Activated CD4-positive, alpha-beta memory T cell treated with anti-CD3 and anti-CD28 coated beads for 36 hours (primary cell): ENCODE measurements at regions of chrX and their contacts with region 1.

Region 1: DNA sequence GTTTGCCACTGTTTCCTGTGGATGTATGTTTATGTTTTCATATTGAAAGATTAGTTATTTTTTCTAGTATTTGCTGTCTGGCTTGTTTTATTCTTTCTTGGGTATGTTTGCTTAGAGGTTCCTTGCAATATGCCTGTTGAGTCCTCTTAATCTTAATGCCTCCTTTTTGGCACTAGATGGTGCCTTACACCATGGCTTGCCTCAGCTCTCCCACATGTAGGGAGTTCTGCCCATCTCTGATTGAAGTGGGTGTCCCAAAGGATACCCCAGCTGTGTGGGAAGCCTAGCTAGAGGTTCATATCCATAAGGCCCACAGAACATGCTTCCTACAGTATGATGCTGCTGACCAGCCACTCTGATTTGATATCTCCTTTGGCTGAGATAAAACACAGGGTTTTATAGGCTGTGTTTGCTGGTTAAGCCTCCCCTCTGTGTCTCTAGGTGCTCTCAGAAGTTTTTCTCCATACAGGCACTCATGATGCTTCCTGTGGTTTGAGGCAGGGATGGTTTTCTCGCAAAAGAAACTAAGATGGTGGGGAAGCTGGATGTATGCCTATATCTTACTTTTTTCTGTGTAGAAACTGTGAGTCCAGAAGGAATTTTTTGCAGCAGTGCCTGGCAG is 162.4 kb downstream of the ASB9 start:
- DNase-seq: peak; percentile 9
- H3K4me3 Mint-ChIP-seq: no peak overlapping the region
- H3K27ac Mint-ChIP-seq: no peak overlapping the region
- H3K4me1 Mint-ChIP-seq: peaks cover 12% of the 10 kb centered on the region
- H3K27me3 Mint-ChIP-seq: peaks cover 3% of the 10 kb centered on the region

Region 2: GRCh38 chrX:15033917-15034316 is 73.6 kb before region 1 on chrX:
- CTCF ChIA-PET with region 1: no interaction called
- POLR2A ChIA-PET with region 1: no interaction called
- intact Hi-C with region 1: no loop called
- DNase-seq: no peak
- H3K4me3 Mint-ChIP-seq: no peak overlapping the region
- H3K27ac Mint-ChIP-seq: no peak overlapping the region
- H3K4me1 Mint-ChIP-seq: peaks cover 16% of the 10 kb centered on the region
- H3K27me3 Mint-ChIP-seq: no peaks in the 10 kb centered on the region

Region 3: DNA sequence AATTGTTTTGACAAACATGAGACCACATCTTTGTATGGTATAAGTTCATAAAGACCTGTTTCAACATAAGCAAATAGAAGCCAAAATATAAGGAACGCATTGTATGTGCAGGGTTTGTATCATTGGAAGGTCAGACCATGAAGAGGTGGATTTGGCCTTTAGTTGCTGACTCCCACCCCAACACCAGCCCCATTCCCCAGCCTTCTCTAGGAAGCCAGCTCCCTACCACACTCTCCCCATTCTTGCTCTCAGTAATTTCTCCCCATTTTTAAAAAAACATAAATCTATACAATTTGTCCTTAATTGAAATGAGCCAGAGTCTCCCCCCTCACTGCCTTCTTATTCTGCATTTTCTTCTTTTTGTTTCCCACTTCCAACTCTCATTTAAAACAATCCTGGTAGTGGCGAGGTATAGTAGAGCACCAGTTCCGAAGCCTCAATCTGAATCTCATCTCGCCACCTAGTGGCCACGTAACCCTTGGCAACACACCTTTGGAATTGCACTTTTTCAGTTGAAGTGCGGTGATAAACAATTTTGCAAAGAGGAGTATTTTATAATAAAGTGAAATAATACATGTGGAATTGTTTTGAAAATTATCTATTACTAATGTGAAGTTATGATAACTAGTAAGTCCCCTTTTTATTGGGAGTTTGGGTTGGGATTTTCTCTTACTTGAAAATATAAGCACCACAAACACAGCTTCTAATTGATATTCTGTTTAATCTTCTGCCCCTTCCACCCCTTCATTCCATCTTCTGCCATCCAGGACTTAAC is 35.8 kb after region 1 on chrX:
- CTCF ChIA-PET with region 1: interaction called, 20 read pairs
- POLR2A ChIA-PET with region 1: no interaction called
- intact Hi-C with region 1: loop called (anchors 1 kb)
- DNase-seq: peak; percentile 59
- H3K4me3 Mint-ChIP-seq: no peak overlapping the region
- H3K27ac Mint-ChIP-seq: no peak overlapping the region
- H3K4me1 Mint-ChIP-seq: peaks cover 15% of the 10 kb centered on the region
- H3K27me3 Mint-ChIP-seq: no peaks in the 10 kb centered on the region